PC-9 (cell line): ENCODE measurements at regions of chr21 and their contacts with region 1.

Region 1: DNA sequence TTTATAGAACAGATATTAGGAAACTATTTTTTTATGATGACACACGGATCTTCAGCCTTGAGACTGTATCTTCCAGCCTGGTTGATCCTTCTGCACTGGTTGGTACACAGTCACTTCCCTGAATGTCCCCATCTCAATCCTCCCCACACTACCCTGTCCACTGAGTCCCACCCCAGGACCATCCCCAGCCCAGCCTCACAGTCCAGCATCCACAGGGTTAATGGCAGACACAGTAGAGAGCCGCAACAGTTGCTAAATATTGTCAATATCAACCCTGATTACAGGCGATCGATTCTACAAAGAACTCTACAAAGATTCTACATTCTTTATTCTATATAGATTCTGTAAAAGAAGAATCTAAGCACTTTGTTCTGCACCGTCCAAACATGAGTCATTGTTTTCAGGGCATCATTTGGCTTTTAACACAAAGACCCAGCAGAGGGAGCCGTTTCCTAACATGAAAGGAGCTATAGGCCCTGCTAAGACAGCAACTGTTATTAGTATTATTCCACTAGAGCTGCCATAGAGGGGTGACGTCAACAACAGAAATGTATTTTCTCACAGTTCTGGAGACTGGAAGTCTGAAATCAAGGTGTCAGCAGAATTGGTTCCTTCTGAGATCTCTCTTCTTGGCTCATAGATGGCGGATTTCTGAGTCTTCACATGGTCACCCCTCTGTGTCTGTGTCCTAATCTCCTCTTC is 30.1 kb upstream of the IFNAR2 start:
- DNase-seq: peak; percentile 64 to 80
- H3K4me3 ChIP-seq: no peak overlapping the region
- H3K27ac ChIP-seq: no peak overlapping the region
- H3K4me1 ChIP-seq: peaks cover 13% of the 10 kb centered on the region
- H3K27me3 ChIP-seq: no peaks in the 10 kb centered on the region
- CTCF ChIP-seq: peak; percentile 79

Region 2: GRCh38 chr21:32834916-32835235 is 364.8 kb before region 1 on chr21:
- CTCF ChIA-PET with region 1: no interaction called
- POLR2A ChIA-PET with region 1: interaction called, 4 read pairs
- intact Hi-C with region 1: loop called (anchors 1 kb)
- DNase-seq: no peak
- H3K4me3 ChIP-seq: no peak overlapping the region
- H3K27ac ChIP-seq: no peak overlapping the region
- H3K4me1 ChIP-seq: no peaks in the 10 kb centered on the region
- H3K27me3 ChIP-seq: peaks cover 22% of the 10 kb centered on the region
- CTCF ChIP-seq: no peak

Region 3: GRCh38 chr21:33136847-33137522 is 62.7 kb before region 1 on chr21:
- CTCF ChIA-PET with region 1: no interaction called
- POLR2A ChIA-PET with region 1: no interaction called
- intact Hi-C with region 1: no loop called
- DNase-seq: no peak
- H3K4me3 ChIP-seq: no peak overlapping the region
- H3K27ac ChIP-seq: no peak overlapping the region
- H3K4me1 ChIP-seq: no peaks in the 10 kb centered on the region
- H3K27me3 ChIP-seq: peaks cover 74% of the 10 kb centered on the region
- CTCF ChIP-seq: no peak

Region 4: DNA sequence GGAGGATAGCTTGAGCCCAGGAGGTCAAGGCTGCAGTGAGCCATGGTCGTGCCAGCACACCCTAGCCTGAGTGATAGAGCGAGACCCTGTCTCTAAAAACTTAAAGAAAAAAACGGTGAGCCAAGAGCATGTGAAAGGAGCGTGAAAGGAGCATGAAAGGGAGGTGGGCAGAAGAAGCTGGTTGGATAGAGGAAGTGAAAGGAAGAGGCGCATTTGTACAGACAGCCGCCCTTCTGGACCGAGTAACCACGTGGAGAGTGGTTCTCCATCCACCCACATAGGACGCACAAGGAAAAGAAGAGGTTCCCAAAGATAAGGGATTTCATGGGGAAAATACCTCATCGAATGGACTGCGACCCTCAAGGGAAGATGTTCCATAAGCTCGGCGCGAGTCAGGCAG is 30.3 kb before region 1 on chr21:
- CTCF ChIA-PET with region 1: no interaction called
- POLR2A ChIA-PET with region 1: no interaction called
- intact Hi-C with region 1: no loop called
- DNase-seq: no peak
- H3K4me3 ChIP-seq: no peak overlapping the region
- H3K27ac ChIP-seq: no peak overlapping the region
- H3K4me1 ChIP-seq: no peaks in the 10 kb centered on the region
- H3K27me3 ChIP-seq: peaks cover 88% of the 10 kb centered on the region
- CTCF ChIP-seq: no peak

Region 5: GRCh38 chr21:33229784-33230544 is 30.3 kb after region 1 on chr21 and contains the start of gene IFNAR2:
- CTCF ChIA-PET with region 1: no interaction called
- POLR2A ChIA-PET with region 1: interaction called, 10 read pairs
- intact Hi-C with region 1: no loop called
- DNase-seq: peak in 1 of 2 experiments; percentile 68
- H3K4me3 ChIP-seq: peak within 1 kb of the TSS; percentile 79
- H3K27ac ChIP-seq: peak within 1 kb of the TSS; percentile 36; the same call in 1 of the 2 replicates
- H3K4me1 ChIP-seq: peaks cover 23% of the 10 kb centered on the region
- H3K27me3 ChIP-seq: no peaks in the 10 kb centered on the region
- CTCF ChIP-seq: no peak
- total RNA-seq, gene IFNAR2: 8.5 and 10.3 TPM in 2 replicates

Region 6: GRCh38 chr21:33374450-33375096 is 174.9 kb after region 1 on chr21:
- CTCF ChIA-PET with region 1: no interaction called
- POLR2A ChIA-PET with region 1: no interaction called
- intact Hi-C with region 1: loop called (anchors 1 kb)
- DNase-seq: peak; percentile 32 to 98
- H3K4me3 ChIP-seq: no peak overlapping the region
- H3K27ac ChIP-seq: peak overlapping the region; percentile 81
- H3K4me1 ChIP-seq: peaks cover 34% of the 10 kb centered on the region
- H3K27me3 ChIP-seq: no peaks in the 10 kb centered on the region
- CTCF ChIP-seq: peak; percentile 71

Region 7: DNA sequence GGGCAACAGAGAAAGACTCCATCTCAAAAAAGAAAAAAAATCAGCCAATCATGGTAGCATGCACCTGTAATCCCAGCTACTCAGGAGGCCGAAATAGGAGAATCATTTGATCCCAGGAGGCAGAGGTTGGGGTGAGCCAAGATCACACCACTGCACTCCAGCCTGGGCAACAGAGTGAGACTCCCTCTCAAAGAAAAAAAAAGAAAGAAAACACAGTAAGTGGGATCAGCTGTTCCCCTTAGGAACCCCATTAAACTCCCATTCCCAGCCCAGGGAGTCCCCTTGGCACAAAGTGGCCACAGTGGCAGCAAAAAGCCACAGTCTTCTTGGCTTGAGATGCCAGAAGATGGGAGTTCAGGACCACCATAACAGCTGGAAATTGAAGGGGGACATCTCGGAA is 271.0 kb after region 1 on chr21:
- CTCF ChIA-PET with region 1: interaction called, 14 read pairs
- POLR2A ChIA-PET with region 1: no interaction called
- intact Hi-C with region 1: no loop called
- DNase-seq: no peak
- H3K4me3 ChIP-seq: no peak overlapping the region
- H3K27ac ChIP-seq: no peak overlapping the region
- H3K4me1 ChIP-seq: no peaks in the 10 kb centered on the region
- H3K27me3 ChIP-seq: no peaks in the 10 kb centered on the region
- CTCF ChIP-seq: no peak